Transverse colon (tissue), 4 donors: ENCODE measurements at regions of chr6 and their contacts with region 1.

Region 1: DNA sequence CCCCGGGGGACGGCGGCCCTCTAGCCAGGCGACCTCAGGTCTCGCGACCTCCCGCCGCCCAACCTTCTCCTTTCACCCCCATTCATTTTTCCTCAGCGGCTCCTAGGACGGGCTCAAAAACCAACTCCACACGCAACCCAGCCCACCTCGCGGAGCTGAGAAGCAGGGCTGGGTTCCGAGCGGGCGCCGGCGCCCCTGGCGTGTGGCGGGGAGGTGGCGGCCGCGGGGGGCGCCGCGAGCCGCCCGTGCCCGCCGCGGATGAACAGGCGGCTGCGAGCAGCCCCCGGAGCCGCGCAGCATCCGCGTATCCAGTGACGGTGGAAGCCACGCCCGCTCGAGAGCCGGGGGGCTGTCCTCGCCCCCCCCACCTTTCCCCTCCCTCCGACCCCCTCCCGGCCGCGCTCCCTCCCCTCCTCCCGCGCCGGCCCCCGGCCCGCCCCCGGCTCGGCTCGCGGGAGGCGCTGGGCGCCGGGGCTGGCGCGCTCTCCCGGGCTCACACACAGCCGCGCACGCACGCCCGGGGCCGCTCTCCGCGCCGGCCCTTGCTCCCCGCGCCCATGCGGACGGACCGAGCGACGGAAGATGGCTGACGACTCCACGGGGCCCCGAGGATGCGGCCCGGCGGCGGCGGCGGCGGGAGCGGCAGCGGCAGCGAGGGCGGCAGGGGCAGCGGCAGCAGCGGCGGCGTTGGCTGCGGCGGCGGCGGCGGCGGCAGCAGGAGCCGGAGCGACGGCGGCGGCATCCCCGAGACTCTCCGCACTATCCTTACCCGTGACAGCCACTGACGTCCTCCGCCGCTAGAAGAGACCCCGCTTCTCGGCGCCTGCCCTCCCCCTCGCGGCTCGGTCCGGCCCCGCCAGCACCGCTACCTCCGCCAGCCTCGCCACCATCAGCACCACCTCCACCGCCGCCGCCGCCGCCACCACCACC is at the start of gene SOBP:
- DNase-seq: peak; percentile 33
- H3K4me3 ChIP-seq: peak within 1 kb of the TSS; percentile 60 to 80 (median 70)
- H3K27ac ChIP-seq: peak within 1 kb of the TSS; percentile 81 to 92 (median 85)
- H3K4me1 ChIP-seq: peaks cover 7 to 37% (median 25%) of the 10 kb centered on the region in 4 donors
- H3K27me3 ChIP-seq: peaks cover 78% of the 10 kb centered on the region
- CTCF ChIP-seq: no peak
- EP300 ChIP-seq: no peak
- POLR2A ChIP-seq: no peak
- total RNA-seq, gene SOBP: 2.6 to 15.9 (median 4.6) TPM

Region 2: DNA sequence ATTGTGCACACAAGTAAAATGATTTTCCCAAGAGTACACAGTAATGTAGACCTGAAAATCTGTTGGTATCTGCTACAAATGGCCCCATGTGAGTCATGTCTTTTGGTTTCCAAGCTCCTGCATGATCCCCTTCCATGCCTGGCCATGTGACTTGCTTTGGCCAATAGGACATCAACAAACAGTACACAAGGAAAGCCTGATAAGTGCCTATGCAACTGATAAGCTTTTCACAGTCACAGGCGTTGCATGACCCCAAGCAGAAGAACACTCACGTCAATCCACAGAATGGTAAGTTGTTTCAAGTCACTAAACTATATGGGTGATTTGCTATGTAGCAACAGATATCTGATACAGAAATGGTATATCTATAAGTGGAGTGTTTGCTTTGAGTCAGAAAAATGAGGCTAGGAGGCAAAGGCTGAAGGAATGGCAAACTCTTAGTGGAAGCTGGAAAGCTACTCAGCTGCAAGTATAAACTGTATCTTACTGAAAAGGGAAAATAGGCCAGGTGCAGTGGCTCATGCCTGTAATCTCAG is 214.5 kb before region 1 on chr6:
- in situ Hi-C with region 1: no loop called
- intact Hi-C with region 1: no loop called
- DNase-seq: no peak
- H3K4me3 ChIP-seq: no peak overlapping the region
- H3K27ac ChIP-seq: no peak overlapping the region
- H3K4me1 ChIP-seq: peaks cover 0 to 12% (median 5%) of the 10 kb centered on the region in 4 donors
- H3K27me3 ChIP-seq: no peaks in the 10 kb centered on the region
- CTCF ChIP-seq: no peak
- EP300 ChIP-seq: no peak
- POLR2A ChIP-seq: no peak

Region 3: GRCh38 chr6:107386340-107386739 is 103.6 kb before region 1 on chr6:
- in situ Hi-C with region 1: no loop called
- intact Hi-C with region 1: no loop called
- DNase-seq: no peak
- H3K4me3 ChIP-seq: no peak overlapping the region
- H3K27ac ChIP-seq: no peak overlapping the region
- H3K4me1 ChIP-seq: peaks cover 0 to 4% (median 0%) of the 10 kb centered on the region in 4 donors
- H3K27me3 ChIP-seq: no peaks in the 10 kb centered on the region
- CTCF ChIP-seq: no peak
- EP300 ChIP-seq: no peak
- POLR2A ChIP-seq: no peak

Region 4: DNA sequence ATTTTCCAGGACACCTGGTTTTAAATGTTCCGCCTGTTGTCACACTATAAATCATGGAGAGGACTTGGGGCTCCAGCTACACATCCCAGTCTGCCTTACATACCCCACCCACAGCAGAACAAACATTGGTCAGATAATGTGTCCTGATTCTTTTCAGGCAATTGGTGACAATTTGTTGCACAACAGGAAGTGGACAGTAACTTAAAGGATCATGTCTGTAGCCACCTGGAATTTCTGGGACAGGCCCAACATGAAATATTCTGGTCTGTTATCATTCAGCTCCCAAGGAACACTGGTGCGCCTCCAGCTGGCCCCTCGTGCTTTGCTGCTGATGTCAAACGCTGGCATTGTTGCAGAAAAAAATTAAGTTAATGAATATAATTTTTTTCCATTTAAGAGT is 117.2 kb after region 1 on chr6:
- in situ Hi-C with region 1: no loop called
- intact Hi-C with region 1: no loop called
- DNase-seq: no peak
- H3K4me3 ChIP-seq: no peak overlapping the region
- H3K27ac ChIP-seq: no peak overlapping the region
- H3K4me1 ChIP-seq: peaks cover 0 to 8% (median 2%) of the 10 kb centered on the region in 4 donors
- H3K27me3 ChIP-seq: no peaks in the 10 kb centered on the region
- CTCF ChIP-seq: no peak
- EP300 ChIP-seq: no peak
- POLR2A ChIP-seq: no peak

Region 5: GRCh38 chr6:107634324-107635056 is 144.6 kb after region 1 on chr6:
- in situ Hi-C with region 1: no loop called
- intact Hi-C with region 1: loop called (anchors 10 kb)
- DNase-seq: no peak
- H3K4me3 ChIP-seq: peak overlapping the region in 1 of 4 donors; percentile 27
- H3K27ac ChIP-seq: no peak overlapping the region
- H3K4me1 ChIP-seq: no peaks in the 10 kb centered on the region
- H3K27me3 ChIP-seq: peaks cover 30% of the 10 kb centered on the region
- CTCF ChIP-seq: no peak
- EP300 ChIP-seq: no peak
- POLR2A ChIP-seq: no peak

Region 6: DNA sequence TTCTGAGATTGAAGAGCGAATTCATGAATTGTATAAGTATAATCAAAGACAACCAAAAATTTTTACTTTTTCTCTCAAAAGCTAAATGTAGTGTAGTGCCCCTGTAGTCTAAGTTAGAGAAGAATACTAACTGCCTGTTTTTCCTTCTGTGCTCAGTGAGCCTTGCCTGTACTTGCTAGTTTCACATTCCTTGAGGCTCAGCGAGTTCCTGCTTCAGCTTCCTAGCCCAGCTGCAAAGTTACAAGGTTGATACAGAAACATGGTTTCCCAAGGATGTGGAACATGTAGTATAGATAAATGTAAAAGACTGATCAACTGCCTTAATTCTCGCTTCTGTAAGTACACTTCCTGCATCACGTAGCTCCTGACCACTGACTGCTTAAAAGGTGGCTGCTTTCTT is 501.2 kb after region 1 on chr6:
- in situ Hi-C with region 1: no loop called
- intact Hi-C with region 1: no loop called
- DNase-seq: no peak
- H3K4me3 ChIP-seq: no peak overlapping the region
- H3K27ac ChIP-seq: no peak overlapping the region
- H3K4me1 ChIP-seq: no peaks in the 10 kb centered on the region
- H3K27me3 ChIP-seq: no peaks in the 10 kb centered on the region
- CTCF ChIP-seq: no peak
- EP300 ChIP-seq: no peak
- POLR2A ChIP-seq: no peak